ENCODE measurements at regions of chr4 and their contacts with region 1.

Region 1: DNA sequence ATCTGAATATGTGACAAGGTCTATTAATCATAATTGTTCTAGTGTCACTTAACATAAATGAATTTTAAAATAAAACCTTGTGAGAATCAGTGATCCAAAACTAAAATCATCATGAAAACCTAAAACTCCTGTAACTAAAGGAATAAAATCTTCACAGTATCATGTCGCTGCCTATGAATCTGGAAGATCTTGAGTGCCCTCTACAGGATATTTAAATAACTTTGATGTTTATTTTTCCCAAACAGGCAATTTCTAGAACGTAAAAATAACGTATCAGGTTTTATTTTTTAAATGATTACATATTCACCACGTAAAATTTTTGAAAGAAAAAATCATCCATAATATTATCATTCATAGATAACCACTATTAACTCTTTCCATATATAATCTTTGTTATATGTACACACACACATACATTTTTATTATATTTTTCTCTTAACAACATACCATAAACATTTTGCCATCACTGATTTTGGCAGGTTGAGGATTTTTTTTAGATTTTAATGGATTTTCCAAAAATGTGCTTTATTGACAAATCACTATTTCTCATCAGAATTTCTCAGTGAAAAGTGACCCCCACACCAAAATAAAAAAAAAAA is 79.6 kb downstream of the COMMD8 start:
- DNase-seq: no peak
- ATAC-seq: no peak
- H3K4me3 Mint-ChIP-seq: no peak overlapping the region
- H3K27ac Mint-ChIP-seq: no peak overlapping the region
- H3K4me1 Mint-ChIP-seq: no peaks in the 10 kb centered on the region
- H3K27me3 Mint-ChIP-seq: peaks cover 8% of the 10 kb centered on the region
- CTCF ChIP-seq: no peak

Region 2: DNA sequence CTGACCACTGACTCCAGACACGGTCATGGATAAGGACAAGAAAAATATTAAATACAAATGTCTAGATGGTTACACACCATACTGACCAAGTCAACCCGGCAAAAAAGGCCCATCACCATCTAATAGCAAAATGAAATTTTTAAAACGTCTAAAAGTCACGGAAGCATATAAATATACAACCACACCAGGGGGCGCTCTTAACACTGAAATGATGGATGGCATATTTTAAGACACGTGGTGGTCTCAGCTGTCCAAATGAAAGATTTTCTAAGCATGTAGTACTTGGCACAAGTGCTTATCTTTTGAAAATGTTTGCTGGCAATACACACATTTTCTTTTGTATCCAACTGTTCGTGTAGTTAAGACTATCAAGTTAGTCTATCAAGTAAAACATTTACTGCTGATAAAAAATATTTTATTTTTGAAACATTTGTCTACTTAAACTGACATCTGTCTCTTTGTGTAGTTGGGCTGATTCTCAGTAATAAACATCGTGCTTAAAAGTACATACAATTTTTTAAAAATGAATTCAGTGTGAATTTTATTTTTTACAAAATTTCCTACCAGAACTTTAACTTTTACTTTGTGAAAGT is 539.5 kb before region 1 on chr4:
- CTCF ChIA-PET with region 1: interaction called, 11 read pairs
- POLR2A ChIA-PET with region 1: no interaction called
- intact Hi-C with region 1: no loop called
- DNase-seq: no peak
- ATAC-seq: no peak
- H3K4me3 Mint-ChIP-seq: no peak overlapping the region
- H3K27ac Mint-ChIP-seq: no peak overlapping the region
- H3K4me1 Mint-ChIP-seq: no peaks in the 10 kb centered on the region
- H3K27me3 Mint-ChIP-seq: no peaks in the 10 kb centered on the region
- CTCF ChIP-seq: peak; percentile 61

Region 3: GRCh38 chr4:47122592-47123291 is 261.2 kb before region 1 on chr4:
- CTCF ChIA-PET with region 1: interaction called, 3 read pairs
- POLR2A ChIA-PET with region 1: no interaction called
- intact Hi-C with region 1: loop called (anchors 10 kb)
- DNase-seq: no peak
- ATAC-seq: peak; percentile 34
- H3K4me3 Mint-ChIP-seq: no peak overlapping the region
- H3K27ac Mint-ChIP-seq: no peak overlapping the region
- H3K4me1 Mint-ChIP-seq: no peaks in the 10 kb centered on the region
- H3K27me3 Mint-ChIP-seq: no peaks in the 10 kb centered on the region
- CTCF ChIP-seq: peak; percentile 65

Region 4: DNA sequence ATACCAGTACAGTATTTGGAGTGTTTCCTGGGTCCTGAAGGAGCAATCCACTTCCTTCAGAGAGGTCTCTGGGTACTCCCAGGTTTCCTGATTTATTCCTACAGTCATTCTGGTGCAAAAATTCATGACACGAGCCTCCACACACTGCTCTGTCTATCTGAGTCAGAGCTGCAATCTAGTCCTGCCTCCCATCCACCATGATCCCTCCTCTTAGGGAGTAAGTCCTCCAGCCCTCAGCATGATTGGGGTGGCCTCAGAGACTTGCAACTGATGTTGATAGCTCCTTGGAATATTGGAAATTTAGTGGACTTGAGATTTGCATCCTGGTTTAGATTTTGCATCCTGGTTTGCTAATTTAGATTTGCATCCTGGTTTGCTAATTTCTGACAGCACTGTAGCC is 612.1 kb after region 1 on chr4:
- CTCF ChIA-PET with region 1: no interaction called
- POLR2A ChIA-PET with region 1: no interaction called
- intact Hi-C with region 1: no loop called
- DNase-seq: no peak
- ATAC-seq: no peak
- H3K4me3 Mint-ChIP-seq: no peak overlapping the region
- H3K27ac Mint-ChIP-seq: no peak overlapping the region
- H3K4me1 Mint-ChIP-seq: no peaks in the 10 kb centered on the region
- H3K27me3 Mint-ChIP-seq: peaks cover 24% of the 10 kb centered on the region
- CTCF ChIP-seq: no peak

Region 5: DNA sequence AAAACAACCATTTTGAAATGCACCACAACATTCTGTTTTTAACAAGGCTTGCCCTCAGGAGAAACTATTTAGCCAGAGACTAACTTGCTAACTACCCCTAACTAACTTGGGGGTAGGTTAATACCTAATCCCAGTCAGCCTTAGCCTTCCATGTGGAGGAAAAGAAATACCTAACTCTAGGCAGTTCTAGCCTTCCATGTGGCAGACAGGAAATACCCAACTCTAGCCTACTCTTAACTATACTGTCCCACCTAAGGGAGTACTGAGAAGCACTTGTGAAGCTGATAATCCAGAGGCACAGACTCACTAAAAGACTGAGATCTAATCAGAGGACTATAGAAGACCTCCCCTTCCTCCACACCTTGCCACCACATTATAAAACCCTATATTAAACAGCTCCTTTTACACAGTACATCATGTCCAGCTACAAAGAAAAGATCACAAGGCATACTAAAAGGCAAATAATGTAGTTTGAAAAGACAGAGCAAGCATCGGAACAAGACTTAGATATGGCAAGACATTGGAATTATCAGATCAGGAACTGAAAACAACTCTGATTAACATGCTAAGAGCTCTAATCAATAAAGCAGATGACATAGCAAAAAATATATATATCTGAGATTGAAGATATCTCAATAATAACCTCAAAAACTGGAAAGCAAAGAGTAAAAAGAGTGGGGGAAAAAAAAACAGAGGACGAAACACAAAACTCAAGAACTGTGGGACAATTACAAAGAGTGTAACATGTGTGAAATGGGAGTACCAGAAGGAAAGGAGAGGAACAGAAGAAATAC is 1343.9 kb after region 1 on chr4:
- CTCF ChIA-PET with region 1: no interaction called
- POLR2A ChIA-PET with region 1: no interaction called
- intact Hi-C with region 1: no loop called
- DNase-seq: no peak
- ATAC-seq: no peak
- H3K4me3 Mint-ChIP-seq: no peak overlapping the region
- H3K27ac Mint-ChIP-seq: no peak overlapping the region
- H3K4me1 Mint-ChIP-seq: peaks cover 79% of the 10 kb centered on the region
- H3K27me3 Mint-ChIP-seq: no peaks in the 10 kb centered on the region
- CTCF ChIP-seq: no peak